Activated T-helper 2 cell treated with anti-CD3 and anti-CD28 coated beads, Interferon-gamma antibody, Interleukin-2, Interleukin-4, amounts not matched to agents 10 μg/mL and 5 μg/mL and 100 μg/mL, durations not matched to agents 14 hours and 24 hours and 36 hours (primary cell): ENCODE measurements at regions of chr12 and their contacts with region 1.

Region 1: GRCh38 chr12:68119724-68120211 is 39.8 kb downstream of the IFNG start:
- DNase-seq: peak; percentile 62
- H3K4me3 Mint-ChIP-seq: peak overlapping the region; percentile 11
- H3K27ac Mint-ChIP-seq: peak overlapping the region; percentile 77
- H3K4me1 Mint-ChIP-seq: peaks cover 38% of the 10 kb centered on the region
- H3K27me3 Mint-ChIP-seq: no peaks in the 10 kb centered on the region

Region 2: DNA sequence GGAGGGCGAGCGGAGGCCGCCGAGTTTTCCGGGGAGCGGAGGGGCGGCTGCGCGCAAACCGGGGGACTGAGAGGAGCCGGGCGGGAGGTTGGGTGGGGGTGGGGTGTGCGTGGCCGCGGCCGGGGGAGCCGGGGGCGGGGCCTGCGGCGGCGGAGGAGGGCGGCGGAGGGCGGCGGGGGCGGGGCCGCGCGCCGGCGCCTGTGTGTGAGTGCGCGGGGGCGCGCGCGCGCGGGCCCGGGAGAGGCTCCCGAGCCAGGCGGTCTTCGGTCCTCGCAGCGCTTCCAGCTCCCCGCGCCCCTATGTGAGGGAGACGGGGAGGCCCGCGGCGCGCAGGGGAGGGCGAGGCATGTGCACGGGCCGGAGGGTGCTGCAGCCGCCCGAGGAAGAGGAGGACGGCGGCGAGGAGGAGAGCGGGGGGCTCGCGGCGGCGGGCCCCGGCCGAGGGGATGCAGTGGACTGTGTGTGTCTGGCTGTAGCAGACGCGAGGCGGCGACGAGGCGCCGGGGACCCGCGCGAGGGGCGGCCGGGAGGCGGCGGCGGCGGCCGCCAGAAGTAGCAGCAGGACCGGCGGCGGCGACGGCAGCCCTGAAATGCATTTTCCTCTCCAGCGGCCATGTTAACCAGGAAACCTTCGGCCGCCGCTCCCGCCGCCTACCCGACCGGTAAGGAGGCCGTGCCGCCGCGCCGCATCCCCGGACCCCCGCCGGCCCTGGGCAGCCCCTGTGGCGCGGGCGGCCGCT is 471.1 kb before region 1 on chr12 and contains the start of gene DYRK2:
- intact Hi-C with region 1: loop called (anchors 2 kb)
- DNase-seq: peak; percentile 66
- H3K4me3 Mint-ChIP-seq: peak within 1 kb of the TSS; percentile 75
- H3K27ac Mint-ChIP-seq: peak within 1 kb of the TSS; percentile 73
- H3K4me1 Mint-ChIP-seq: peaks cover 37% of the 10 kb centered on the region
- H3K27me3 Mint-ChIP-seq: peaks cover 4% of the 10 kb centered on the region
- total RNA-seq, gene DYRK2: 19.7 and 20.6 TPM in 2 replicates

Region 3: GRCh38 chr12:67827820-67828383 is 291.9 kb before region 1 on chr12:
- intact Hi-C with region 1: loop called (anchors 5 kb)
- DNase-seq: peak; percentile 11
- H3K4me3 Mint-ChIP-seq: peak overlapping the region; percentile 50
- H3K27ac Mint-ChIP-seq: peak overlapping the region; percentile 81
- H3K4me1 Mint-ChIP-seq: peaks cover 13% of the 10 kb centered on the region
- H3K27me3 Mint-ChIP-seq: no peaks in the 10 kb centered on the region

Region 4: GRCh38 chr12:68137335-68137830 is 17.6 kb after region 1 on chr12:
- intact Hi-C with region 1: loop called (anchors 1 kb)
- DNase-seq: no peak
- H3K4me3 Mint-ChIP-seq: no peak overlapping the region
- H3K27ac Mint-ChIP-seq: peak overlapping the region; percentile 26
- H3K4me1 Mint-ChIP-seq: peaks cover 53% of the 10 kb centered on the region
- H3K27me3 Mint-ChIP-seq: no peaks in the 10 kb centered on the region

Region 5: GRCh38 chr12:68189821-68190242 is 70.1 kb after region 1 on chr12:
- intact Hi-C with region 1: loop called (anchors 1 kb)
- DNase-seq: no peak
- H3K4me3 Mint-ChIP-seq: no peak overlapping the region
- H3K27ac Mint-ChIP-seq: peak overlapping the region; percentile 56
- H3K4me1 Mint-ChIP-seq: peaks cover 16% of the 10 kb centered on the region
- H3K27me3 Mint-ChIP-seq: peaks cover 52% of the 10 kb centered on the region

Region 6: DNA sequence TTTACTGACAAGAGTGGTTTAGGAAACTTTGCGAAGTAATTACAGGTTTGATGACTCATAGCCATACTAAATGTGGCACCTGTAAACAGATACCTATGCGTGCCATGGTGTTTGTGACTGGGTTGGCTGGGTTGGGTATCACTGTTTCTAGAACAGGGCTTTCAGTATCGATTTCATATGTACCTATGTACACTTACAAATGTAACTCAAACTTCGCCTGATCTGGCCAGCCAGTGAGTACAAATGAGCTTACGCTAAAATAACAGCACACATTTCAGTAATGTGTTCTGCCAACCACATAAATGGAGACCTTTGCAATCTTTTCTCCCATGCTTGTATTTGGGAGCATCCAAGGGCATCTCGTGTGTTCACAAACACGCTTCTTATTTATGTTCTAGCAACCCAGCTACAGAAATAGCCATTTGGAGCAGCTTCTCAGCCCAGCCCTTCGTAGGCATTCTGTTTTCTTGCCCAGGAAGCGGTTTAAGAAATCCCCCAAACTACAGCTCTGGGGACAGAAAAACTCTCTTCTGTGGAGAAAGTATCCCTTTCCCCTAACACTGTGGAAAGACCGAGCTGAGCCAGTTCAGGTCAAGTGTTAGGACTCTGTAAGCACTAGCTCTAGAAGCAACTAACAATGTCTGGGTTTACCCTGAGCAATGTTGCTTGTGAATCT is 254.7 kb after region 1 on chr12:
- intact Hi-C with region 1: loop called (anchors 1 kb)
- DNase-seq: peak; percentile 57
- H3K4me3 Mint-ChIP-seq: no peak overlapping the region
- H3K27ac Mint-ChIP-seq: peak overlapping the region; percentile 91
- H3K4me1 Mint-ChIP-seq: peaks cover 30% of the 10 kb centered on the region
- H3K27me3 Mint-ChIP-seq: no peaks in the 10 kb centered on the region

Region 7: DNA sequence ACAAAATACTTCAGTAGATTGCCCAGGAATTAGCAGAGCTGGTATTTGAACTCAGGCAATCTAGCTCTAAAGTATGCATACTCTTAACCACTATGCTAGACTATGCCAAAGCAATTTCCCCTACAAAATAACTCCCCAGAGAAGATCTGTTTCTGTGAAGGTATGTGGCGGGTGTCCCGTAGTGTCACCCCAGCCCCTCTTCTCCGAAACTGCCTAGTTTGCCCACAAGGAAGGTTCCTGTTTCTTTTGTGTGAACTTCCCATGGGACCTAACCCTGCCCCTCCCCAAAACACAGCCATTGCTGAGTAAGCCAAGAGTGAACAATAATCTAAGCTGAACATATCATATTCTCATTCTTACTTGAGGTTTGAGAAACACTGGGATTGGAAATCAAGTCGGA is 475.5 kb after region 1 on chr12:
- intact Hi-C with region 1: loop called (anchors 5 kb)
- DNase-seq: no peak
- H3K4me3 Mint-ChIP-seq: no peak overlapping the region
- H3K27ac Mint-ChIP-seq: no peak overlapping the region
- H3K4me1 Mint-ChIP-seq: peaks cover 33% of the 10 kb centered on the region
- H3K27me3 Mint-ChIP-seq: no peaks in the 10 kb centered on the region